HepG2 (cell line): ENCODE measurements at regions of chr3 and their contacts with region 1.

Region 1: GRCh38 chr3:23761440-23761896 is 44.3 kb upstream of the UBE2E1 start:
- DNase-seq: peak; percentile 29
- ATAC-seq: peak; percentile 97
- H3K4me3 ChIP-seq: no peak overlapping the region
- H3K27ac ChIP-seq: no peak overlapping the region
- H3K4me1 ChIP-seq: no peaks in the 10 kb centered on the region
- H3K27me3 ChIP-seq: peaks cover 0 to 6% of the 10 kb centered on the region in 2 experiments; a peak in 1 of 5 replicates
- CTCF ChIP-seq: peak; percentile 42
- EP300 ChIP-seq: no peak
- POLR2A ChIP-seq: no peak
- RAD21 ChIP-seq: no peak

Region 2: DNA sequence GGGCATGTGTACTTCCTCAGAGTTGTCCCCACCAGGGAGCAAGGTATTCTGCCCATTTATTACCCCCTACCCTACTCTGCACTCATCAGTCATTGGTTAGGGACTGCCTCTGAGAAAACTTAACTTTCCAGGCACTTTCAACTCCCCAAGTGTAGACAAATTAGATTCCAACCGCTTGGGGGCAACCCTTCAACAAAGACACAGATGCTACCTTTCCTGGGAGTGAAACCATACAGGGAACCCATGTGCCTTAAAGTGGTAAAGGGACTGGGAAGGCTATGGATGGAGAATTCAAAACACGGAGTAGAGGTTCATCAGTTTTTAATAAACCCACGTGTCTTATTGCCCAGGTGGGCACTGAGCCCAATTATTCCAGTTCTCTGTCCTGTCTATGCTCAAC is 577.7 kb before region 1 on chr3:
- CTCF ChIA-PET with region 1: no interaction called
- POLR2A ChIA-PET with region 1: no interaction called
- in situ Hi-C with region 1: no loop called
- intact Hi-C with region 1: loop called (anchors 5 kb)
- DNase-seq: peak; percentile 43
- ATAC-seq: peak; percentile 93
- H3K4me3 ChIP-seq: no peak overlapping the region
- H3K27ac ChIP-seq: no peak overlapping the region
- H3K4me1 ChIP-seq: no peaks in the 10 kb centered on the region
- H3K27me3 ChIP-seq: no peaks in the 10 kb centered on the region
- CTCF ChIP-seq: peak; percentile 63
- EP300 ChIP-seq: no peak
- POLR2A ChIP-seq: no peak
- RAD21 ChIP-seq: 0 out of 2 replicates have a peak, but pooled peaks have one; percentile 14

Region 3: GRCh38 chr3:23712656-23713559 is 48.6 kb before region 1 on chr3:
- CTCF ChIA-PET with region 1: no interaction called
- POLR2A ChIA-PET with region 1: no interaction called
- in situ Hi-C with region 1: no loop called
- intact Hi-C with region 1: no loop called
- DNase-seq: no peak
- ATAC-seq: peak; percentile 30; the same call in 1 of the 3 replicates
- H3K4me3 ChIP-seq: no peak overlapping the region
- H3K27ac ChIP-seq: no peak overlapping the region
- H3K4me1 ChIP-seq: no peaks in the 10 kb centered on the region
- H3K27me3 ChIP-seq: peaks cover 2 to 24% of the 10 kb centered on the region in 2 experiments; a peak in 2 of 5 replicates
- CTCF ChIP-seq: peak; percentile 24; the same call in 1 of the 2 replicates
- EP300 ChIP-seq: no peak
- POLR2A ChIP-seq: no peak
- RAD21 ChIP-seq: no peak